ENCODE measurements at regions of chr12 and their contacts with region 1.

Region 1: DNA sequence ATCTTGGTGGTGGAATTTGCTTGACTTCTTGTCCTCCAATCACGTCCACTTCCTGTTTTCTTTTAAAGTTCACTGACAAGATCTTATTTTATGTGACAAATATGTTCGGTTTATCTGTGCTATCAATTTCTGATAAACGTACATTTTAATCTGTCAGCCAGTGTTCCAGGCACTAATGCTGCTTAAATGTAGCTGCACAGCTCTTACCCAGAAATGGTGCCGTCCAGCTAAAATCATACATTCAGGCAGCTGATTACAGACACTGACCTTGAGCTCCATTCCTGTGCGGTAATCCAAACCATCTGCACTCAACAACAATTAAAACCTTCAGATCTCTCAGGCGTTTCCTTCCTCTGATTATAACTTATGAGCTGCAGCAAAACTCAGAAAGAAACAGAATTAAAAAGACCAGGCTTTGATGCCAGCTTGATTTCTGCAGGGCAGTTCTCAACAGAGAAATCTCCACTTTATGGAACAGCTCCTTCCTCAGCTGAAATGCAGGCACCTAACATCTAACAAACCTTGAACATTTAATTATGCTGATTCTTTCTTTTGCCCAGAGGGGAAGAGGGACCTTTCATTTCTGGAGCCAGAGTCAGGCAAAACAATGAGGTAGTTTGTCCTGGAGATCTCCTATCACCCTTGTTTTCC is 26.4 kb upstream of the RASSF3 start:
- DNase-seq: peak in 2 of 10 donors; percentile 23
- ATAC-seq: peak; percentile 53 to 57
- H3K4me3 Mint-ChIP-seq: peak overlapping the region; percentile 48 to 85 (median 70)
- H3K27ac Mint-ChIP-seq: peak overlapping the region; percentile 41 to 92 (median 84)
- H3K4me1 Mint-ChIP-seq: peaks cover 16 to 33% (median 30%) of the 10 kb centered on the region in 4 donors
- H3K27me3 Mint-ChIP-seq: no peaks in the 10 kb centered on the region

Region 2: GRCh38 chr12:64571411-64571810 is 12.5 kb before region 1 on chr12:
- POLR2A ChIA-PET with region 1: interaction called, 12 read pairs
- DNase-seq: peak in 5 of 10 donors; percentile 8 to 42 (median 24)
- ATAC-seq: peak; percentile 57 to 76
- H3K4me3 Mint-ChIP-seq: peak overlapping the region in 2 of 10 donors; percentile 16 to 30
- H3K27ac Mint-ChIP-seq: peak overlapping the region in 8 of 10 donors; percentile 3 to 89 (median 55)
- H3K4me1 Mint-ChIP-seq: peaks cover 11 to 38% (median 33%) of the 10 kb centered on the region in 4 donors
- H3K27me3 Mint-ChIP-seq: no peaks in the 10 kb centered on the region

Measured in naive thymus-derived CD8-positive, alpha-beta T cell (primary cell).